Transverse colon (tissue), 4 donors: ENCODE measurements at regions of chr13 and their contacts with region 1.

Region 1: DNA sequence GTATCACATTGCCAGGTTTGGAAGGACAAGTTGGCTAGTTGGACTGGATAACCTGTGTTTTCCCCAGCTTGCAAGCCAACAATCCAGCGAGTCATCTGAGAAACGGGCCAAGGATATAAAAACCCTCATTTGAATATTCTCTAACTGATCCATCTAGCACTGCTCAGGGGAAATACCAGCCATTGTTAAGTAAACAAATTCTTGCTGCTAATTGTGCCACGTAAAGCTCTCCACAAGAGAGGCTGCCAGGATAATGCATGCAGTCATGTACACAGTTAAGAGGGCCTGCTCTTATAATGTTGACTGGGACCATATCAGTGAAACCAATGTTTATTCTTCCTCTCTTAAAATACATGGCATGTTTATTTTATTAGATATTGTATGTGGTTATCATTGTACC is 663.2 kb upstream of the SGCG start:
- DNase-seq: no peak
- H3K4me3 ChIP-seq: no peak overlapping the region
- H3K27ac ChIP-seq: no peak overlapping the region
- H3K4me1 ChIP-seq: no peaks in the 10 kb centered on the region
- H3K27me3 ChIP-seq: no peaks in the 10 kb centered on the region
- CTCF ChIP-seq: no peak
- EP300 ChIP-seq: no peak
- POLR2A ChIP-seq: no peak

Region 2: DNA sequence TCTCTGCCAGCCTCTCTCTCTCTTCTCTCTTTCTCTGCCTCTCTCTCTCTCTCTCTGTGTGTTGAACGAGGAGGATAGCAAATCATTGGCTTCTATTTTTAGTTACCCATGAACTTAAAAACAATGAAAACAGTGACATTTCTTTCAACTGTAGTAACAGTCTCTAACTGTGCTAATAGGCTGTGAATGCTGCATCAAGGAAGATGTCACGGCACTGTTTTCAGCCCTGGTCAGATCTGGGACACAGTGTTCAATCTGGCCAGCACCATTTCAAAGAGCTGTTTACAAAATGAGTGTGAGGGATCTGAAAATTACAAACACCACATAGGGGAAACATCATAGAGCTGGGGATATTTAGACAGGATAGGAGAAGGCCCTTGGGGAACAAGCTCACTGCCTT is 129.6 kb before region 1 on chr13:
- in situ Hi-C with region 1: no loop called
- intact Hi-C with region 1: no loop called
- DNase-seq: no peak
- H3K4me3 ChIP-seq: no peak overlapping the region
- H3K27ac ChIP-seq: no peak overlapping the region
- H3K4me1 ChIP-seq: no peaks in the 10 kb centered on the region
- H3K27me3 ChIP-seq: no peaks in the 10 kb centered on the region
- CTCF ChIP-seq: no peak
- EP300 ChIP-seq: no peak
- POLR2A ChIP-seq: no peak

Region 3: GRCh38 chr13:22538400-22538799 is 20.9 kb after region 1 on chr13:
- in situ Hi-C with region 1: no loop called
- intact Hi-C with region 1: loop called (anchors 1 kb)
- DNase-seq: no peak
- H3K4me3 ChIP-seq: no peak overlapping the region
- H3K27ac ChIP-seq: no peak overlapping the region
- H3K4me1 ChIP-seq: no peaks in the 10 kb centered on the region
- H3K27me3 ChIP-seq: no peaks in the 10 kb centered on the region
- CTCF ChIP-seq: no peak
- EP300 ChIP-seq: no peak
- POLR2A ChIP-seq: no peak

Region 4: DNA sequence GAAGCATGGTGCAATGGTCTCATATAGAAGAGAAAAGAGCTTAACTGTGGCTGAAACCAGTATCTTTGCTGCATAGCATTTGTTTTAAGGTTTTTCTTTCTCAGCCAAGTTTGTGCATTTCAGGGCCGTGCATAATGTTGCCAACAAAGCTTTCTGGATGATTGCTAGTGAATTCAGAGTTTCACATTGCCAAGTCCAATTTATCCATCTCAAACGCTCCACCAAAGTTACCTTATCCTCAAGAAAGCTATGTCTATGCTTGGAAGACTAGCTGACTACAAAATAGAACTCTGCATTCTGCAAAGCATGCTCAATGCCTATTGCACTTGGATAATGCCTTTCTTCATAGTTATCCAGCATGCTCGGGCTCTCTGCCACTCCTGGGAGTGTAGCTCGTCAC is 127.4 kb after region 1 on chr13:
- in situ Hi-C with region 1: no loop called
- intact Hi-C with region 1: no loop called
- DNase-seq: no peak
- H3K4me3 ChIP-seq: no peak overlapping the region
- H3K27ac ChIP-seq: no peak overlapping the region
- H3K4me1 ChIP-seq: no peaks in the 10 kb centered on the region
- H3K27me3 ChIP-seq: no peaks in the 10 kb centered on the region
- CTCF ChIP-seq: no peak
- EP300 ChIP-seq: no peak
- POLR2A ChIP-seq: no peak